Natural killer cell (primary cell): ENCODE measurements at regions of chr20 and their contacts with region 1.

Region 1: GRCh38 chr20:35883778-35884540 is 70.3 kb downstream of the SCAND1 start:
- DNase-seq: peak; percentile 38 to 77
- ATAC-seq: peak; percentile 76 to 97 (median 94)
- H3K4me3 ChIP-seq: no peak overlapping the region
- H3K4me3 Mint-ChIP-seq: no peak overlapping the region
- H3K27ac ChIP-seq: no peak overlapping the region
- H3K27ac Mint-ChIP-seq: peak overlapping the region; percentile 17 to 51
- H3K4me1 ChIP-seq: peaks cover 2% of the 10 kb centered on the region
- H3K4me1 Mint-ChIP-seq: peaks cover 7 to 19% of the 10 kb centered on the region in 2 donors
- H3K27me3 ChIP-seq: no peaks in the 10 kb centered on the region
- H3K27me3 Mint-ChIP-seq: no peaks in the 10 kb centered on the region
- CTCF ChIP-seq: peak; percentile 60

Region 2: DNA sequence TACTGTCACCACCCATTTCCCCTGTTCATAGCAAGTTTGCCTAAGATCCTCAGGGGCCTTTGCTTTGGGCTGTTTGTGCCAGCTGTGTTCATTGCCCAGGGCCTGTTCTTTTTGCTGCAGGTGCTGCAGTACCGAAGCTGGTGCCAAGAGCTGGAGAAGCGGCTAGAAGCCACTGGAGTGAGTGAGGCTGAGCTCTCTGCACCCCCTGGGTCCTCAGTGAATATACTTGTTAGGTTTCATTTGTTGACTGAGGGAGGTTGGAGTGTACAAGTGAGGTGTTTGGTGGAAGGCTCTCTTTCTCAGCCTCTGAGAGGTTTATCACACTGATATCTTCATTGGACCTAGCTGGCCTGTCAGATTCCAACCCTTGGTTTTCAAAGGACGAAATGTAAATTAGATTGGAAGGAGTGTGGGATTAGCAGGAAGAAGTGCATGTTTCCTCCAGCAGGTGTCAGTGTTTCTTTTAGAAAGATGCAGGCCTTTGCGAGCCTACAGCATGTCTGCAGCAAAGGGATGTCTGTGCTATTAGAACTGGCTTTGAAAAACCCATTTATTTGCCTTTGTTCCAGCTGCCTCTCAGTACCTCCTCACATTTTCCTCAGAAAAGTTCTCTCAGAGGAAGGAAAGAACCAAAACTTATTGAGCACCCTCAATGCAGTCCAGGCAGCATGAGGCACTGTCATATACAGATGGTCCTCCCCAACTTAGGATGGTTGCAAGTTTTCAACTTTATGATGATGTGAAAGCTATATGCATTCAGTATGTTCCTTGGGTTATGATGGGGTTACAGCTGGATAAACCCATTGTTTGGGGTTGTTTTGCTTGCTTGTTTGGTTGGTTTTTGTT is 420.3 kb before region 1 on chr20:
- intact Hi-C with region 1: loop called (anchors 5 kb)
- DNase-seq: peak; percentile 25 to 82
- ATAC-seq: peak; percentile 84 to 98 (median 92)
- H3K4me3 ChIP-seq: no peak overlapping the region
- H3K4me3 Mint-ChIP-seq: no peak overlapping the region
- H3K27ac ChIP-seq: no peak overlapping the region
- H3K27ac Mint-ChIP-seq: peak overlapping the region in 1 of 2 donors; percentile 21
- H3K4me1 ChIP-seq: no peaks in the 10 kb centered on the region
- H3K4me1 Mint-ChIP-seq: peaks cover 0 to 16% of the 10 kb centered on the region in 2 donors
- H3K27me3 ChIP-seq: no peaks in the 10 kb centered on the region
- H3K27me3 Mint-ChIP-seq: no peaks in the 10 kb centered on the region
- CTCF ChIP-seq: peak; percentile 83

Region 3: GRCh38 chr20:35601008-35601973 is 282.7 kb before region 1 on chr20:
- intact Hi-C with region 1: loop called (anchors 5 kb)
- DNase-seq: peak; percentile 61 to 91
- ATAC-seq: peak; percentile 83 to 88 (median 86)
- H3K4me3 ChIP-seq: peak overlapping the region; percentile 48
- H3K4me3 Mint-ChIP-seq: peak overlapping the region; percentile 76
- H3K27ac ChIP-seq: no peak overlapping the region
- H3K27ac Mint-ChIP-seq: peak overlapping the region in 1 of 2 donors; percentile 75
- H3K4me1 ChIP-seq: peaks cover 19% of the 10 kb centered on the region
- H3K4me1 Mint-ChIP-seq: peaks cover 0 to 12% of the 10 kb centered on the region in 2 donors
- H3K27me3 ChIP-seq: peaks cover 20% of the 10 kb centered on the region
- H3K27me3 Mint-ChIP-seq: peaks cover 24 to 37% of the 10 kb centered on the region in 2 donors
- CTCF ChIP-seq: peak; percentile 45

Region 4: DNA sequence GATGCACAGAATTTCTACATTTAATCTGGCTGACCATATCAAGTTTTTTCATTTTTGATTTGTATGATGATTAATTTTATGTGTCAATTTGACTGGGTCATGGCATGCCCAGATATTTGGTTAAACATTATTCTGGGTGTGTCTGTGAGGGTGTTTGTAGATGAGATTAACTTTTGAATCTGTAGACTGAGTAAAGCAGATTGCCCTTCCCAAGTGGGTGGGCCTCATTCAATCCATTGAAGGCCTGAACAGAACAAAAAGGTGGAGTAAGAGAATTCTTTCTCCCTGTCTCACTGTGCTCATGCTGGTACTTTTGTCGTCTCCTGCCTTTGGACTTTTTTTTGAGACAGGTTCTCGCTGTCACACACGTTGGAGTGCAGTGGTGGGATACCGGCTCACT is 198.5 kb after region 1 on chr20:
- intact Hi-C with region 1: no loop called
- DNase-seq: no peak
- ATAC-seq: no peak
- H3K4me3 ChIP-seq: no peak overlapping the region
- H3K4me3 Mint-ChIP-seq: no peak overlapping the region
- H3K27ac ChIP-seq: no peak overlapping the region
- H3K27ac Mint-ChIP-seq: no peak overlapping the region
- H3K4me1 ChIP-seq: no peaks in the 10 kb centered on the region
- H3K4me1 Mint-ChIP-seq: no peaks in the 10 kb centered on the region
- H3K27me3 ChIP-seq: no peaks in the 10 kb centered on the region
- H3K27me3 Mint-ChIP-seq: peaks cover 11 to 24% of the 10 kb centered on the region in 2 donors
- CTCF ChIP-seq: no peak